ENCODE measurements at regions of chr15 and their contacts with region 1.

Region 1: GRCh38 chr15:88745696-88746095 is 57.5 kb upstream of the ACAN start:
- DNase-seq: no peak
- H3K4me3 ChIP-seq: no peak overlapping the region
- H3K27ac ChIP-seq: no peak overlapping the region
- H3K4me1 ChIP-seq: peaks cover 7% of the 10 kb centered on the region
- H3K27me3 ChIP-seq: peaks cover 9 to 15% of the 10 kb centered on the region in 2 experiments
- CTCF ChIP-seq: no peak
- POLR2A ChIP-seq: no peak

Region 2: GRCh38 chr15:88690331-88690730 is 55.4 kb before region 1 on chr15:
- CTCF ChIA-PET with region 1: no interaction called
- POLR2A ChIA-PET with region 1: no interaction called
- dilution Hi-C with region 1: no loop called
- intact Hi-C with region 1: no loop called
- DNase-seq: no peak
- H3K4me3 ChIP-seq: no peak overlapping the region
- H3K27ac ChIP-seq: no peak overlapping the region
- H3K4me1 ChIP-seq: no peaks in the 10 kb centered on the region
- H3K27me3 ChIP-seq: peaks cover 0 to 2% of the 10 kb centered on the region in 2 experiments
- CTCF ChIP-seq: no peak
- POLR2A ChIP-seq: no peak

Region 3: GRCh38 chr15:88727439-88727838 is 18.3 kb before region 1 on chr15:
- CTCF ChIA-PET with region 1: no interaction called
- POLR2A ChIA-PET with region 1: no interaction called
- dilution Hi-C with region 1: no loop called
- intact Hi-C with region 1: loop called (anchors 1 kb)
- DNase-seq: no peak
- H3K4me3 ChIP-seq: no peak overlapping the region
- H3K27ac ChIP-seq: no peak overlapping the region
- H3K4me1 ChIP-seq: no peaks in the 10 kb centered on the region
- H3K27me3 ChIP-seq: no peaks in the 10 kb centered on the region
- CTCF ChIP-seq: no peak
- POLR2A ChIP-seq: no peak

Measured in endothelial cell of umbilical vein (primary cell).